K562 (cell line): ENCODE measurements at regions of chr15 and their contacts with region 1.

Region 1: GRCh38 chr15:84818261-84819131 is 1.3 kb downstream of the ALPK3 start:
- DNase-seq: peak in 2 of 4 experiments; percentile 33 to 46
- ATAC-seq: no peak
- H3K4me3 ChIP-seq: no peak overlapping the region
- H3K27ac ChIP-seq: peak overlapping the region; percentile 37; the same call in 2 of the 3 replicates
- H3K4me1 ChIP-seq: peaks cover 24 to 33% of the 10 kb centered on the region in 2 experiments
- H3K27me3 ChIP-seq: no peaks in the 10 kb centered on the region
- CTCF ChIP-seq: peak in 1 of 3 experiments; percentile 12; a peak in 1 of 6 replicates
- EP300 ChIP-seq: no peak
- POLR2A ChIP-seq: no peak
- RAD21 ChIP-seq: no peak

Region 2: DNA sequence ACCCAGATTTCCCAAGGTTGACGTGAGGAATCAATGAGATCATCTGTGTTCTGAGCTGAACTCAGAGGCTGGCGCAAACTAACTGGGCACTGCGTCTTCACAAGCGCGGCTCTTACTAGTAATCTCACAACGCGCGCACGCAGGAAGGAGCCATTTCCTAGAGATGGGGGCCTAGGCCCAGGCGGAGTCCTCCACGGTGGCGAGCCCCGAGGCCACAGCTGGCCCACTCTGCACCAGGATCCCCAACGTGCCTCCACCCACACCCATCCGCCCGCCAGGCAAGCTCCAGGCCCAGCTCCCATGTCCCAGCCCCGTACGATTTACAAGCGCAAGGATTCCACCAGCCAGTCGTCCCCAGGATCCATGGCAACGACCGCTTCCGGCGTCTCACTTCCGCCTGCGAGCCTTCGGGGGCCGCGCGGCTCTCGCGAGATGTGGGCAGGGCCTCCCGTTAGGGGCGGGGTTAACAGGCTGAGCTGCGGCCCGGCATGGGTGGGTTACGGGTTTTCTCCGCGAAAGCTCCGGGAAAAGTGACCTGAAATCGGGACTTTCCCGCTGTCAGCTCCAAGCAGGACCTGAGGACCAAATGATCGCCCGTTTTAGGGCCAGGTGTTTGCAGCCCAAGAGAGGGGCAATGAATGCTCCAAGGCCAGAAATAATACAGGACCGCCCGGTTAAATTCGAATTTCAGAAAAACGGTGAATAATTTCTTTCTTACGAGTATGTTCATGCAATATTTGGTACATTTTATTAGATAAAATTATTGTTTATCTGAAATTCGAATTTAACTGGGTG is 164.4 kb before region 1 on chr15 and contains the start of gene WDR73:
- CTCF ChIA-PET with region 1: interaction called, 3 read pairs
- POLR2A ChIA-PET with region 1: no interaction called
- in situ Hi-C with region 1: no loop called
- intact Hi-C with region 1: loop called (anchors 2 kb)
- DNase-seq: peak; percentile 93 to 97 (median 96)
- ATAC-seq: peak; percentile 99
- H3K4me3 ChIP-seq: peak within 1 kb of the TSS; percentile 78
- H3K27ac ChIP-seq: peak within 1 kb of the TSS; percentile 72
- H3K4me1 ChIP-seq: peaks cover 6 to 24% of the 10 kb centered on the region in 2 experiments; a peak in 3 of 5 replicates
- H3K27me3 ChIP-seq: no peaks in the 10 kb centered on the region
- CTCF ChIP-seq: peak in 1 of 3 experiments; percentile 34; a peak in 2 of 6 replicates
- EP300 ChIP-seq: no peak
- POLR2A ChIP-seq: peak; percentile 83
- RAD21 ChIP-seq: no peak
- polyA plus RNA-seq, gene WDR73: 9.2 to 11.5 TPM

Region 3: DNA sequence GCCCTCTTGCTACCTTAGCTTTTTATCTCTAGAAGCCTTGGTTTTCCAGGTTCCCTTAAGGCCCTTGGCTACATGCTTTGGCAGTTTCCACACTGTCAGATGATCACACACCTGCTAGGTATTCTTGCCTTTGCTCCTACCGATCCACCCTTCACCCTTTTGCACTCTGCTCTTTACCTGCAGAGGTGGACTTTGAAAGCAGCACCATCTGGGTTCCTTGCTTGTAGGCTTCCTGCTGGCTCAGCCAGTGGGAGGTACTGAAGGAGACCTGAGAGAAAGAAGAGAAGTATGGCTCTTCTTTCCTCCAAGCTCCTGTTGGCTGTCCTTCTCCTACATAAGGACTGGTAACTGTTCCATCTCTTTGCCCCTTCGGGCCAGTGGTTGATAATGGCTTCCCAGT is 77.4 kb before region 1 on chr15:
- CTCF ChIA-PET with region 1: no interaction called
- POLR2A ChIA-PET with region 1: no interaction called
- in situ Hi-C with region 1: no loop called
- intact Hi-C with region 1: no loop called
- DNase-seq: no peak
- ATAC-seq: peak; percentile 57
- H3K4me3 ChIP-seq: no peak overlapping the region
- H3K27ac ChIP-seq: no peak overlapping the region
- H3K4me1 ChIP-seq: no peaks in the 10 kb centered on the region; a peak in 1 of 5 replicates
- H3K27me3 ChIP-seq: no peaks in the 10 kb centered on the region
- CTCF ChIP-seq: no peak
- EP300 ChIP-seq: no peak
- POLR2A ChIP-seq: no peak
- RAD21 ChIP-seq: no peak